ENCODE measurements at regions of chr6 and their contacts with region 1.

Region 1: GRCh38 chr6:157461000-157461915 is 80.3 kb downstream of the ZDHHC14 start:
- DNase-seq: peak; percentile 84
- H3K4me3 ChIP-seq: no peak overlapping the region
- H3K27ac ChIP-seq: peak overlapping the region; percentile 72
- H3K4me1 ChIP-seq: peaks cover 24% of the 10 kb centered on the region
- H3K27me3 ChIP-seq: no peaks in the 10 kb centered on the region
- CTCF ChIP-seq: peak; percentile 31 to 52
- POLR2A ChIP-seq: no peak

Region 2: DNA sequence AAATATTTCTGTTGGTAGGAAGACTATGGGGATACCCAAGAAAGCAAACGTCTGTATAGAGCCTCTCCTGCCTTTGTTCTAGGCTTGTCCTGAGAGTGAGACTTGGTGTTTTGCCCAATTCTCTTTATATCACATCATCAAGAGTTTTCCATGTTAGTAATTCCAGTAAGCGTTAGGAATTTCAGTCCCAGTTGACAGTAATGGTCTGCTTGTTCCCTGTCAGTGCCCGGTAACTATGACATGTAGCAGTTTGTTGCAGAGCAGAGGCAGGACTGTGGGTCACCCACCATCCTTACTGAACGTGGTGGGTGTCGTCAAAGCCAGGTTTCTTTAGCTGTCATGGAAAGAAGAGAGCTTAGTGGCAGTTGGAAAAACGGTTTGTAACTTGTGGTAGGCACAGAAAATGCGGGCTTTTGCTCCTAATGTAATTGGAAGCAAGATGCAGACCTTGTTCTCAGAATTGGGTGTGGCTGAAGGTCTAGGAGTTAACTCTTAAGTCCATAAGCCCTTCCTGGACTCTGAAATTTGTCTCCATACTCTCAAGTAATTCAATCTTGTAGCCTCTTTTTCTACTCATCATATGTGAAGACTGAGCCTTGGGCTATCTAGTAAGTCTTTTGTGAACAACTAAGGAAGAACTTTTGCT is 326.7 kb before region 1 on chr6:
- CTCF ChIA-PET with region 1: no interaction called
- POLR2A ChIA-PET with region 1: no interaction called
- dilution Hi-C with region 1: no loop called
- intact Hi-C with region 1: no loop called
- DNase-seq: no peak
- H3K4me3 ChIP-seq: no peak overlapping the region
- H3K27ac ChIP-seq: no peak overlapping the region
- H3K4me1 ChIP-seq: peaks cover 8% of the 10 kb centered on the region
- H3K27me3 ChIP-seq: no peaks in the 10 kb centered on the region
- CTCF ChIP-seq: no peak
- POLR2A ChIP-seq: no peak

Region 3: GRCh38 chr6:157497579-157497978 is 36.3 kb after region 1 on chr6:
- CTCF ChIA-PET with region 1: no interaction called
- POLR2A ChIA-PET with region 1: no interaction called
- dilution Hi-C with region 1: no loop called
- intact Hi-C with region 1: loop called (anchors 2 kb)
- DNase-seq: no peak
- H3K4me3 ChIP-seq: no peak overlapping the region
- H3K27ac ChIP-seq: no peak overlapping the region
- H3K4me1 ChIP-seq: peaks cover 45% of the 10 kb centered on the region
- H3K27me3 ChIP-seq: no peaks in the 10 kb centered on the region
- CTCF ChIP-seq: no peak
- POLR2A ChIP-seq: no peak

Region 4: DNA sequence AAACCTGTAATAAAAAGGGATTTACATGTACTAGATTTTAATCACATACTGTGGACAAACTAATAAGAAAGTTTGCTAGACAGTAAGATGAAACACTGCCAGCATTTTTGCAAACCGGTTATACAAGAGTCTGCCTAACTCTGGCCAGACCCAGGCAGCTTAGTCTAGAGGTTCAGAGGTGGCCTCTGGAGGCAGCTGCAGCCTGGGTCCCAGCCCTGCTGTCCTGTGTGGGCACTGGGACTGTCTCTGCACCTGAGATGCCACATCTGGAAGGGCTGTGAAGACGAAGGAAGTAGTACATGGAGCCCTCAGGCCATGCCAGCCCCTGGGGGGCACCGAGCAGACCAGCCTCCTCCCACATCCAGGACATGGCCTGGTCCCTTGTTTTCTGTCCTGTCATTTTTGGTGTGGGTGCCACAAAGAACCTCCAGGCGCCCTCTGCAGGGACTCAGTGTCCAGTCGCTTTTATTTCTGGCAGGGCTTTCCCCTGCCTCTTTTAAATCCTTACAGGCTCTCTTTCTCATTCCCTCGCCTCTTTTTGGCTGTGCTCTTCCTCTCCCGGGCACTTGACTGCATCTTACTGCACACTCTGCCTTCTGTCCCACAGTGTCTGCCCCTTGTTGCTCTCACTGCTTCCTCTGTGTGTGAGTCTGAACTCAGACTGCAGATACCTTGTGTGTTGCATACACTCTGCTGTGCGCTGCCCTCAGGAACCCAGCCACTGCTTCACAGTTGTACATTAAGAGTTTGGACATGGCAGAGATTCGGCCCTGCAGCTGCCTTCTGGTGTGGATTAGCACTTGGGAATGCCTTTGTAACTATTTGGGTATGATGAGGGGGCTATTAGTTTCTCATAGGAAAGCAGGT is 136.4 kb after region 1 on chr6:
- CTCF ChIA-PET with region 1: interaction called, 5 read pairs
- POLR2A ChIA-PET with region 1: no interaction called
- dilution Hi-C with region 1: no loop called
- intact Hi-C with region 1: loop called (anchors 5 kb)
- DNase-seq: peak; percentile 57
- H3K4me3 ChIP-seq: no peak overlapping the region
- H3K27ac ChIP-seq: no peak overlapping the region
- H3K4me1 ChIP-seq: no peaks in the 10 kb centered on the region
- H3K27me3 ChIP-seq: no peaks in the 10 kb centered on the region
- CTCF ChIP-seq: peak; percentile 50 to 68
- POLR2A ChIP-seq: no peak

Region 5: DNA sequence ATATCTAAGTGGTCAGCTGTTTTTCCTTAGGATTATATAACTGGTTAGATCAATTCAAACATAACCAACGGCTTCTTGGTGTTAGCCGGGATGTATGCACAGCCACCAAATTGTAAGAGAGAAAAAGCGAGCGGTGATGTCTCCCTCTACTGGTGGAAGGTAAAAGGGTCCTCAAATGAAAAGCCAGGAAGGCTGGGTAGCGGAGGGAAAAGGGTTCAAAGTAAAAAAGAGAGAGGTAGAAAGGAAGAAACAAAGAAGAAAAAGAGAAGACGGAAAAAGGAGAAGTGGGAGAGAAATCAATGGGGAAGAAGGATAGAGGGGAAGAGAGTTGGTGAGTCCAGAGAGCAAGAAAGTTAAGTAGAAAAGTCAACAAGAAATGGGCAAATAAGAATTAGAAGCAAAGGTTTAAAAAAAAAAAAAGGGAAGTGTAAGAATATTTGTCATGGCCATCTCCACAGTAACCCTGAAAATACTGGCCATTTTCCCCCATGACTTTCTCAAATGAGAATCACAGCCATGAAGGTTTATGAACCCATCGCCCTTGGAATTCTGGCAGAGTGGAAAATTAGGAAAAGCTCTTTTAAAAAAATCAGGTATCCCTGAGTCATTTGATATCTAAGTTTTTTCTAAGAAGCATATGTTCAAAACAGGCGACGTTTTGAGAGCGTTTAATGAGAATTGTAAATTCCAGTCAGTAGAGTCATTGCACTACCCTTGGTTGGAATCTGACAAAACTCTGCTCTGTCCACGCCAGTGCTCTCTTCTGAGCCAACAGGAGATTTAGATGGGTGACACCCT is 206.2 kb after region 1 on chr6:
- CTCF ChIA-PET with region 1: interaction called, 4 read pairs
- POLR2A ChIA-PET with region 1: no interaction called
- dilution Hi-C with region 1: no loop called
- intact Hi-C with region 1: loop called (anchors 5 kb)
- DNase-seq: peak; percentile 73
- H3K4me3 ChIP-seq: no peak overlapping the region
- H3K27ac ChIP-seq: no peak overlapping the region
- H3K4me1 ChIP-seq: peaks cover 7% of the 10 kb centered on the region
- H3K27me3 ChIP-seq: no peaks in the 10 kb centered on the region
- CTCF ChIP-seq: peak; percentile 75 to 88
- POLR2A ChIP-seq: no peak

Measured in endothelial cell of umbilical vein (primary cell).